ENCODE measurements at regions of chr3 and their contacts with region 1.

Region 1: GRCh38 chr3:121979734-121980449 is 42.2 kb downstream of the ILDR1 start:
- DNase-seq: peak; percentile 92
- ATAC-seq: peak; percentile 84
- H3K4me3 ChIP-seq: peak overlapping the region; percentile 30; the same call in 1 of the 2 replicates
- H3K27ac ChIP-seq: peak overlapping the region; percentile 84
- H3K4me1 ChIP-seq: peaks cover 47% of the 10 kb centered on the region
- H3K27me3 ChIP-seq: no peaks in the 10 kb centered on the region
- CTCF ChIP-seq: no peak

Region 2: GRCh38 chr3:121698901-121699300 is 281.0 kb before region 1 on chr3:
- CTCF ChIA-PET with region 1: no interaction called
- POLR2A ChIA-PET with region 1: no interaction called
- intact Hi-C with region 1: no loop called
- DNase-seq: no peak
- ATAC-seq: no peak
- H3K4me3 ChIP-seq: no peak overlapping the region
- H3K27ac ChIP-seq: no peak overlapping the region
- H3K4me1 ChIP-seq: no peaks in the 10 kb centered on the region
- H3K27me3 ChIP-seq: no peaks in the 10 kb centered on the region
- CTCF ChIP-seq: no peak

Region 3: GRCh38 chr3:121883507-121883906 is 96.4 kb before region 1 on chr3:
- CTCF ChIA-PET with region 1: interaction called, 3 read pairs
- POLR2A ChIA-PET with region 1: no interaction called
- intact Hi-C with region 1: loop called (anchors 5 kb)
- DNase-seq: peak; percentile 89
- ATAC-seq: peak; percentile 82
- H3K4me3 ChIP-seq: no peak overlapping the region
- H3K27ac ChIP-seq: no peak overlapping the region
- H3K4me1 ChIP-seq: peaks cover 9% of the 10 kb centered on the region; the same call in 1 of the 2 replicates
- H3K27me3 ChIP-seq: no peaks in the 10 kb centered on the region
- CTCF ChIP-seq: peak; percentile 95

Region 4: GRCh38 chr3:122233101-122233952 is 253.4 kb after region 1 on chr3:
- CTCF ChIA-PET with region 1: no interaction called
- POLR2A ChIA-PET with region 1: no interaction called
- intact Hi-C with region 1: no loop called
- DNase-seq: no peak
- ATAC-seq: no peak
- H3K4me3 ChIP-seq: no peak overlapping the region
- H3K27ac ChIP-seq: no peak overlapping the region
- H3K4me1 ChIP-seq: no peaks in the 10 kb centered on the region
- H3K27me3 ChIP-seq: peaks cover 94% of the 10 kb centered on the region
- CTCF ChIP-seq: no peak

Region 5: DNA sequence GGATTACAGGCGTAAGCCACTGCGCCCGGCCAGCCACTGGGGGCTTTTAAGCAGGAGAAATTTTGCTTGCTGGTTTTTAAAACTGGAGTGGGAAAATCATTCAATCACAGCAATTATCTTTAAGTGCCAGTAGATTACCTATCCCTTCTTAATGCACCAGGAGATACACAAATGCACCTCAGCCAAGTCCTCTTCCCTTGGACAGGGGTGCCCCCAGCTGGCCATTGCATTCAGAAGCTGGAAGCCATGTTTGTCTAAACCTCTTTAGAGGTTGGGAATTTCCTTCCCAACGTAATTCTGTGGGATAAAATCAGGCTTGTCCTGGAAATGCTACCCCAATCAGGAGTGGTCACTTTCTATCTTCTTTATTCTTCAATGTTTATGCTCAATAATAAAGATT is 376.5 kb after region 1 on chr3:
- CTCF ChIA-PET with region 1: no interaction called
- POLR2A ChIA-PET with region 1: no interaction called
- intact Hi-C with region 1: loop called (anchors 10 kb)
- DNase-seq: peak; percentile 76
- ATAC-seq: peak; percentile 72
- H3K4me3 ChIP-seq: no peak overlapping the region
- H3K27ac ChIP-seq: no peak overlapping the region
- H3K4me1 ChIP-seq: peaks cover 10% of the 10 kb centered on the region
- H3K27me3 ChIP-seq: no peaks in the 10 kb centered on the region
- CTCF ChIP-seq: peak; percentile 90